Astrocyte of the cerebellum (primary cell): ENCODE measurements at regions of chr19 and their contacts with region 1.

Region 1: GRCh38 chr19:28324275-28325060 is 888.5 kb downstream of the UQCRFS1 start:
- DNase-seq: no peak
- H3K4me3 ChIP-seq: no peak overlapping the region
- CTCF ChIP-seq: peak; percentile 35

Region 2: DNA sequence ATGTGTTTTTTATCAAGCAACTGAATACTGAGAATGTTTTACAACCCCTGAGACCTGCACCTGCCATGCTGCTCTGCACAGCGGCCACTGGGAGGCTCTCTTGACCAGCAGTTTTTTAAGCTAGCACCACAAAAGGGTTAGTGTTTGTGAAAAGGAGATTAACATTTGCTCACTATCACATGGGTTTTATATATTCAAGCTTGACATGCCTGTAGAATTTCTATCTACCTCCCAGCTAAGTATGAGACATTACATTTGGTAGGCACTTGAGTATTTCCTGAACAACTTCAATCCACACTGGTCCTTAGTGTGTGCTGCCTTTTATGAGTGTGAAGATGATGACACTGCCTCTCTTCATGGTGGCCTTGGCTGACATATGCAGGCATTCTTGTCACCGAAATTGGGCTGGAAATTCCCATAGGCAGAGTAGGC is 350.4 kb before region 1 on chr19:
- in situ Hi-C with region 1: loop called (anchors 10 kb)
- DNase-seq: peak; percentile 55
- H3K4me3 ChIP-seq: no peak overlapping the region
- CTCF ChIP-seq: peak; percentile 92

Region 3: DNA sequence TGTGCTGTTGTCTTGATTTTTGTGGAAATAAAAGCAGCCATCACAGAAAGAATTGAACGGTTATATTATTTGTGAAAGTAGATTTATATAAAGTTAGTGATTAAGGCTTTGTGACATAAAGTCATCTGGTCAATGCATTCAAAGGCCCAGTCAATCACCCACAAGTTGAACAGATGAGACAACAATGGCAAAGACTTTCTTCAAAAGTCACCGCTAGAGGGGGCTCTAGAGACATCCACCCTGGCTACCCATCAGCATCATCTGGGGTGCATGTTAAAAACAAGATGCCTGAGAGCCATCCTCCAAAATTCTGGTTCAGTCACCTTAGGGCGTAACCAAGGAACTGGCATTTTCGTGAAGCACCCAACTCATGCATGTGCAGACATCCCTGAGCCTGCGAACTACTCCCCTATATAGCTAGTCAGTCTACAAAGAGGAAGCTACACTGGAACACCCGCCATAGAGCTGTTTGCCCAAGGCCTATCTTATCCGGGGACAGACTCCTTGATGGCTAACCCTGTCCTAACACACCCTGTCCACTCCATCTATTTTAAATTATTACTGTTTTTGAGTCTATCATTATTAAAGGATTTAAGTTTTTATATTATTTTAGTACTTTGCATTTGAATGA is 82.1 kb before region 1 on chr19:
- in situ Hi-C with region 1: loop called (anchors 5 kb)
- DNase-seq: peak; percentile 11
- H3K4me3 ChIP-seq: no peak overlapping the region
- CTCF ChIP-seq: peak; percentile 83

Region 4: DNA sequence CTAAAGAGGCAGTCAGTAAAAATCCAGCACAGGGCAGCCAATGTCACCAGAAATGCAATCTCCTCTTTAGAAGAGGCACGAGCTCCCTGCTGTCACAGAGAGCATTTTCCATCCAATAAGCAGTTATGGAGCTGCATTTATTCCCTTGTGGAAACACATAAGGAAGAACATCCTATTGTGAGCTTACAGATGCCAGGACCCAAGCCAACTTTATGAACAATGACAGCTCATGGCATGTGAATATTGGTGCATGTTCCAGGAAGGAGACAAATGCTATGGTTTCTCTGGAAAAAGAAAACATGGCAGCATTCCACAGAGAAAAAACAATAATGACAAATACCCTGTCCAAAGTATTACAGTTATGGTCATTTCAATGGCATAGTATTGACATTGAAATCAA is 67.1 kb before region 1 on chr19:
- in situ Hi-C with region 1: no loop called
- DNase-seq: no peak
- H3K4me3 ChIP-seq: no peak overlapping the region
- CTCF ChIP-seq: no peak